Kidney (tissue), 22 donors: ENCODE measurements at regions of chr4 and their contacts with region 1.

Region 1: DNA sequence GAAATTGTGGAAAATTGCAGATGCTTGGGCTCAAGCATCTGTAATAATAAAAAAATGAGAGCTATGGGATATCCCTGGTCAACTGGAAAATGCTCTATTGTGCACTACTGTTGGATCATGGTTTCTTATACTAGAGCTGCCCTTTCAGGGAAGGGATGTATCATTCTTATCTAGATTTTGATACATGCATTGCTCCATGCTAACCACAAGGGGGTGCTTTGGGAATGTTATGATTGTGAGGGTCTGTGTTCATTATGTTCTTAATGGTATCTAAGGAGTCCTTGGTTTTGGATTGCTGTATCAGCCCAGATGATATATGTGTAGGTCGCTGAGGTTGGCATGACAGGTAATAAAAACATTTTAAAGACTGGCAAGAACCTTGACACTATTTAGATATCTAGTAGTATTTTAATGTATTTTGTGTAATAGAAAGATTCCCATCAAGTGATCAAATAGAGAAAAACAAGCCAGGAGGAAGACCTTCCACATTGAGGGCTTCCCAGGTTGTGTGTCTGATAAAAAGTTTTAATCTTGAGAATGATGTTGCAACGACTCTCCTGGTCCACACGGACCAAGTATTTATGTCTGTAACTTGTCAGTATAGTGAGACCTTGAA is 49.2 kb upstream of the TLR2 start:
- DNase-seq: peak in 1 of 5 donors; percentile 37
- H3K4me3 ChIP-seq: no peak overlapping the region
- H3K27ac ChIP-seq: no peak overlapping the region
- H3K4me1 ChIP-seq: no peaks in the 10 kb centered on the region
- H3K27me3 ChIP-seq: no peaks in the 10 kb centered on the region
- CTCF ChIP-seq: peak; percentile 50

Region 2: DNA sequence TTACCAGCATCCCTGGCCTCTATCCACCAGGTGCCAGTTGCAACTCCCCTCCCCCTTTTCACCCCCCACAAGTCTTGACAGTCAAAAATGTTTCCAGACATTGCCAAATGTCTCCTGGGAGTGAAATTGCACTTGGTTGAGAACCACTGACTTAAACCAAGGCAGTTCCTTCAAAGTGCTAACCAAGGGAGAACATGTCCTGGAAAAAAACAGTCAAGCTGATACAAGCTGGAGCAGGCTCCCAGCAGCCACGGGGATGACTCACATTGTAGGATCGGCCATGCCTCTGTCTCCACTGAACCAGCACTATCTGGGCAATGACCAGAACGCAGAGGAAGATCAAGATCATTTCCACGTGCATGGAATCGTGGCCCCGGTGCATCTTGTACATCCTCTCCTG is 113.5 kb after region 1 on chr4:
- intact Hi-C with region 1: loop called (anchors 5 kb)
- DNase-seq: no peak
- H3K4me3 ChIP-seq: no peak overlapping the region
- H3K27ac ChIP-seq: no peak overlapping the region
- H3K4me1 ChIP-seq: no peaks in the 10 kb centered on the region
- H3K27me3 ChIP-seq: no peaks in the 10 kb centered on the region
- CTCF ChIP-seq: no peak